ENCODE measurements at regions of chr1 and their contacts with region 1.

Region 1: DNA sequence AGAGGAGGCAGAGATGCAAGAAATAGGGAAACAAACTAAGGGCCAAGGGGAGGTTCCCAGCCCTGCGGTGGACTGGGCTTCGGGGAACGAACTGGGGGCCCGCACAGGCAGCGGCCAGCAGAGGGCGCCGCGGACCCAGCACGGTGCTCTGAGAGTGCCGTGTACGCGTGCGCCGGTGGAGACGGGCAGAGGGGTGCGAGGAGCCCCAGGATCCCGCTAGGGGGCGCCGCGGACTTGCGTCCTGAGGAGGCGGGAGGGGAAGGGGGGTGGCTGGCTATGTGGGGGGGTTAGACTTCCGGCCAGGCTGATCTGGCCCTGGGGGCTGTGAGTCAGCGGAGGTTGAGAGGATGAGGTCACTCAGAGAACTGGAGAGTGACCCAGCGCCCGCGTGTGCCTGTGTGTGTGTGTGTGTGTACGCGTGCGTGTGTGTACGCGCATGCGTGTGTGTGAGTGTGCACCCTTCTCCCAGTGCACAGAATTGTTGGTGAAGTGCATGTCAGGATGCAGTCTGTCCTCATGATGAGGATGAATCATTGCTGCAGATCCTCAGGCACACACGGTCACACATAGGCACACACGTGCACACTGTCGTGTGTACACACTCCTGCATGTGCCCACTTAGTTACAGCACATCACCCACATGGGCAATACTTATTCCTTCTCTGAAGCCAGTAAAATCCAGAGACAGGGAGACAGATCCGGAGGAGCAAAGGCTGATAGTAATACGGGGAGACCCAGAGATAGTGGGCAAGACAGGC is 17.0 kb downstream of the NES start:
- DNase-seq: peak; percentile 97
- ATAC-seq: peak; percentile 88
- H3K4me3 Mint-ChIP-seq: peak overlapping the region; percentile 75
- H3K27ac Mint-ChIP-seq: peak overlapping the region; percentile 89
- H3K4me1 Mint-ChIP-seq: peaks cover 45% of the 10 kb centered on the region
- H3K27me3 Mint-ChIP-seq: peaks cover 27% of the 10 kb centered on the region
- CTCF ChIP-seq: peak; percentile 98

Region 2: DNA sequence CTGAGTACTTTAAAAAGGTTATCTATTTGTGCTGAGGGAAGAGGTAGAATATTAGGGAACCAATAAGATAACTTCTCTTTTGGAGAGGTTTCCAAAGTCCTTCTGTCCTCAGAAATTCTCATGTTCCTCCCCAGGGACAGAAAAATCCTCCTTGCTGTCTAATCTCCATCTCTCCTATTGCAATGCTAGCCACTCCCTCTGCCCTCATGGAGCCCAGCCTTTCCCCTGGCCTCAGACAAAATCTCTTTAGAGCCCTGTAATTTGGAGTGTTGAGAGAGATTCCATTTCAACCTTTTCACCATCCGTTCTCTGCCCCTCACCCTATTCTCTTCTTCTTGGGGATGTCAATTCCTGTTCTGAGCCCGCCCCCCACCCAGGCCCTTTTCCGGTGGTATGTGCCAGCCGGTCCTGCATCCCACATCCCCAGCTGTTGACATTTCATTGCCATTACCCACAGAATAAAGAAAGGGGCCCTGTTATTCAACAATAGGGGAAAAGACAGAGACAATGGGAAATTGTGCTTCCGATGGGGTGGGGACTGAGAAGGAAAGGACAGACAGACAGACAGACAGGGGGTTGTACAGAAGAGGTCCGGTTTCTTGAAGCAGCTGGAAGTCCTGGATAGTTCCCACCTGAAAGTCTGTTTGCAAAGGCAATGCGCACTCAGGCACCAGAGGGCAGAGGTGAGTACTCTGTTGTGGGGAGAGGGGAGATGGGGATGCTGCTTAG is 41.2 kb before region 1 on chr1 and contains the start of gene HAPLN2:
- CTCF ChIA-PET with region 1: interaction called, 273 read pairs
- POLR2A ChIA-PET with region 1: interaction called, 3 read pairs
- intact Hi-C with region 1: loop called (anchors 5 kb)
- DNase-seq: peak; percentile 37
- ATAC-seq: no peak
- H3K4me3 Mint-ChIP-seq: no peak within 1 kb of the TSS
- H3K27ac Mint-ChIP-seq: no peak within 1 kb of the TSS
- H3K4me1 Mint-ChIP-seq: peaks cover 4% of the 10 kb centered on the region
- H3K27me3 Mint-ChIP-seq: peaks cover 40% of the 10 kb centered on the region
- CTCF ChIP-seq: no peak
- total RNA-seq, gene HAPLN2: not detected

Region 3: DNA sequence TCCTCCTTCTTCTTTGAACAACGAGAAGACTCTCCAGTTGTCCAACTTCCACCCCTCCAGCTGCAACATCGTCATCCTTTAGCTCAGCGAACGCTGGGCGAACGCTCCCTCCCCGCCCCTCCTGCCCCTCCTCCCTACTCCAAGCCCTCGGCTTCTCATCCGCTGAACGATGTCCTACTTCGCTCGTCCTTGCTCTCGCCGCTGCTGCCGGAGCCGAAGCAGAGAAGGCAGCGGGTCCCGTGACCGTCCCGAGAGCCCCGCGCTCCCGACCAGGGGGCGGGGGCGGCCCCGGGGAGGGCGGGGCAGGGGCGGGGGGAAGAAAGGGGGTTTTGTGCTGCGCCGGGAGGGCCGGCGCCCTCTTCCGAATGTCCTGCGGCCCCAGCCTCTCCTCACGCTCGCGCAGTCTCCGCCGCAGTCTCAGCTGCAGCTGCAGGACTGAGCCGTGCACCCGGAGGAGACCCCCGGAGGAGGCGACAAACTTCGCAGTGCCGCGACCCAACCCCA is 18.4 kb before region 1 on chr1 and contains the start of gene BCAN:
- CTCF ChIA-PET with region 1: interaction called, 42 read pairs
- POLR2A ChIA-PET with region 1: interaction called, 4 read pairs
- intact Hi-C with region 1: no loop called
- DNase-seq: peak; percentile 41
- ATAC-seq: peak; percentile 26
- H3K4me3 Mint-ChIP-seq: peak within 1 kb of the TSS; percentile 10
- H3K27ac Mint-ChIP-seq: no peak within 1 kb of the TSS
- H3K4me1 Mint-ChIP-seq: peaks cover 20% of the 10 kb centered on the region
- H3K27me3 Mint-ChIP-seq: peaks cover 78% of the 10 kb centered on the region
- CTCF ChIP-seq: no peak
- total RNA-seq, gene BCAN: not detected

Region 4: GRCh38 chr1:156677616-156678596 is 17.7 kb after region 1 on chr1:
- CTCF ChIA-PET with region 1: interaction called, 35 read pairs
- POLR2A ChIA-PET with region 1: interaction called, 12 read pairs
- intact Hi-C with region 1: no loop called
- DNase-seq: peak; percentile 53
- ATAC-seq: peak; percentile 45
- H3K4me3 Mint-ChIP-seq: no peak overlapping the region
- H3K27ac Mint-ChIP-seq: no peak overlapping the region
- H3K4me1 Mint-ChIP-seq: peaks cover 14% of the 10 kb centered on the region
- H3K27me3 Mint-ChIP-seq: peaks cover 59% of the 10 kb centered on the region
- CTCF ChIP-seq: peak; percentile 82

Region 5: GRCh38 chr1:156705918-156706656 is 45.9 kb after region 1 on chr1:
- CTCF ChIA-PET with region 1: interaction called, 38 read pairs
- POLR2A ChIA-PET with region 1: interaction called, 3 read pairs
- intact Hi-C with region 1: no loop called
- DNase-seq: peak; percentile 87
- ATAC-seq: peak; percentile 67
- H3K4me3 Mint-ChIP-seq: peak overlapping the region; percentile 75
- H3K27ac Mint-ChIP-seq: peak overlapping the region; percentile 75
- H3K4me1 Mint-ChIP-seq: peaks cover 34% of the 10 kb centered on the region
- H3K27me3 Mint-ChIP-seq: peaks cover 19% of the 10 kb centered on the region
- CTCF ChIP-seq: peak; percentile 99

Region 6: DNA sequence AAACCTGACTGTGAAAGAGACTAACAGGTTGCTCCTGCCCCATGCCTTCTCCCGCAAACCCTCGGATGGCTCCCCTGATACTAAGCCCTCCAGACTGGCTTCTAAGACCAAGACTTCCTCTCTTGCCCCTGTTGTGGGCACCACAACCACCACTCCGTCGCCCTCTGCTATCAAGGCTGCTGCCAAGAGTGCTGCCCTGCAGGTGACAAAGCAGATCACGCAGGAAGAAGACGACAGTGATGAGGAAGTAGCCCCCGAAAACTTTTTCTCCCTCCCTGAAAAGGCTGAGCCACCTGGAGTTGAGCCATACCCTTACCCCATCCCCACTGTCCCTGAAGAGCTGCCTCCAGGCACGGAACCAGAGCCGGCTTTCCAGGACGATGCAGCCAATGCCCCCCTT is 126.5 kb after region 1 on chr1:
- CTCF ChIA-PET with region 1: no interaction called
- POLR2A ChIA-PET with region 1: no interaction called
- intact Hi-C with region 1: no loop called
- DNase-seq: no peak
- ATAC-seq: no peak
- H3K4me3 Mint-ChIP-seq: no peak overlapping the region
- H3K27ac Mint-ChIP-seq: no peak overlapping the region
- H3K4me1 Mint-ChIP-seq: peaks cover 7% of the 10 kb centered on the region
- H3K27me3 Mint-ChIP-seq: no peaks in the 10 kb centered on the region
- CTCF ChIP-seq: no peak

Measured in activated CD8-positive, alpha-beta T cell treated with anti-CD3 and anti-CD28 coated beads for 36 hours (primary cell).